ENCODE measurements at regions of chr11 and their contacts with region 1.

Region 1: DNA sequence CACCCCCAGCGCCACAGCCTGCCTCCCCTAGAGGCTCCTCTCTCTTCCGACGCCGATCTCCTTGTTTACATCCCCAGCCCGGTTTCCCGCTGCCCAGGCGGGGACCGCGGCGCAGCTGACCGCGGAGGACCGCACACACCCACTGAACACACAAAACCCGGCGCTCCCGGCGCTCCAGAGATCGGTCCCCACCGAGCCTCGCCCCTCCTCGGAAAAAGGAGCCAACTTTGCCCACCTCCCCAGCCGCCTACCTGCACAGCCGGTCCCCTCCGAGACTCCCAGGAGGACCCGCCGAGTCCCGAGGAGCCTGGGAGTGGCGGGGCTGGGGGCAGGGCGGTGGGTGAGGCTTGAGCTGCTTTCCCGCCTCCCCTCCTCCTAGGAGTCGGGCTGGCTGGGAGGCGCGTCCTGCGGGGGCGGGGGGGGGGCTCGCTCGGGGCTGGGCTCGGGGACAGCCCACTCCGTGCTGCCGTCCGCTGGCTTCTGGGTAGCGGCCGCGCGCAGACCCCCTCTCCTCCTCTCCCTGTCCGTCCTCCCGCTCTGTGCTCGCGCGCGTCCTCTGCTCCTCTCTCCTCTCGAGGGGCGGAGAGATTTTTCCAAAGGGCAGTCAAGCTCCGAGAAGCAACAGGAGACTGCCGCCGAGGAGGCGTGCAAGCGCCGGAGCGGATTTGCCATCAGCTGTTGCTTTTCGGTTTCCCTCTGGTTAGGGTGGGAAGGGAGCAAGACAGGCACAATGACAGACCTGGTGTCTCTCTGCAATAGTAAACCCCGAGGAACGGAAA is at the start of gene FXYD6:
- DNase-seq: peak; percentile 72 to 80 (median 79)
- ATAC-seq: peak; percentile 48 to 79 (median 72)
- H3K4me3 ChIP-seq: peak within 1 kb of the TSS; percentile 36 to 96 (median 77)
- H3K27ac ChIP-seq: peak within 1 kb of the TSS; percentile 49 to 96 (median 90)
- H3K4me1 ChIP-seq: peaks cover 0 to 61% (median 43%) of the 10 kb centered on the region in 12 donors
- H3K27me3 ChIP-seq: peaks cover 0 to 23% (median 0%) of the 10 kb centered on the region in 9 donors
- CTCF ChIP-seq: no peak
- POLR2A ChIP-seq: no peak
- total RNA-seq, gene FXYD6: 24.6 to 51.2 (median 35.0) TPM

Region 2: GRCh38 chr11:117597071-117597470 is 279.5 kb before region 1 on chr11:
- intact Hi-C with region 1: no loop called
- DNase-seq: peak in 3 of 5 donors; percentile 20 to 44 (median 39)
- ATAC-seq: no peak
- H3K4me3 ChIP-seq: no peak overlapping the region
- H3K27ac ChIP-seq: no peak overlapping the region
- H3K4me1 ChIP-seq: peaks cover 0 to 12% (median 0%) of the 10 kb centered on the region in 12 donors
- H3K27me3 ChIP-seq: no peaks in the 10 kb centered on the region
- CTCF ChIP-seq: no peak
- POLR2A ChIP-seq: no peak

Region 3: GRCh38 chr11:117861151-117862018 is 15.1 kb before region 1 on chr11:
- intact Hi-C with region 1: loop called in 1 of 10 experiments (anchors 2 kb)
- DNase-seq: peak; percentile 72 to 81 (median 77)
- ATAC-seq: peak; percentile 72 to 92 (median 75)
- H3K4me3 ChIP-seq: peak overlapping the region in 6 of 12 donors; percentile 3 to 20 (median 11)
- H3K27ac ChIP-seq: peak overlapping the region; percentile 7 to 95 (median 88)
- H3K4me1 ChIP-seq: peaks cover 9 to 79% (median 54%) of the 10 kb centered on the region in 12 donors
- H3K27me3 ChIP-seq: no peaks in the 10 kb centered on the region
- CTCF ChIP-seq: no peak
- POLR2A ChIP-seq: peak in 1 of 2 donors; percentile 12

Measured in heart left ventricle (tissue), 16 donors.